Keratinocyte (primary cell): ENCODE measurements at regions of chr7 and their contacts with region 1.

Region 1: GRCh38 chr7:88034083-88034695 is 100.1 kb downstream of the ADAM22 start:
- DNase-seq: no peak
- H3K4me3 ChIP-seq: no peak overlapping the region
- H3K27ac ChIP-seq: no peak overlapping the region
- H3K4me1 ChIP-seq: no peaks in the 10 kb centered on the region
- H3K27me3 ChIP-seq: no peaks in the 10 kb centered on the region
- CTCF ChIP-seq: no peak

Region 2: DNA sequence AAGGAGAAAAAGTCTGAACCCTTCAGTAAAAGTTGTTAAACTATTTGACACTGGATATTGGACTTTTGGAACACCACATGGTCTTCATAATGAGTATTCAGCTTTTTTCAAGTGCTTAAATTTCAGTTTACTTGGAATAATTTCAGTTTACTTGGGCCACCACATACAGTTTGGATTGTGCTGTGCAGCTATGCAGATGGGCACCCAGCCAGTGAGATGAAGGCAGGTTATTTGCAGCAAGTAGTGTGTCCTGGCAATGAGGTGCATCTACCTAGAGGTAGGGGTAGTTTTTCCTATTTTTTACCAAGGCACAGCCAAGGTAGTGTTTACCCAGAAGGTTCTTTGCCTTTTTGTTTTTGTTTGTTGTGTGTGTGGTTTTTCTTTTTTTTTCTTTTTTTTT is 124.1 kb before region 1 on chr7:
- dilution Hi-C with region 1: no loop called
- DNase-seq: no peak
- H3K4me3 ChIP-seq: no peak overlapping the region
- H3K27ac ChIP-seq: no peak overlapping the region
- H3K4me1 ChIP-seq: no peaks in the 10 kb centered on the region
- H3K27me3 ChIP-seq: no peaks in the 10 kb centered on the region
- CTCF ChIP-seq: no peak

Region 3: GRCh38 chr7:87944531-87944930 is 89.7 kb before region 1 on chr7:
- dilution Hi-C with region 1: no loop called
- DNase-seq: no peak
- H3K4me3 ChIP-seq: no peak overlapping the region
- H3K27ac ChIP-seq: no peak overlapping the region
- H3K4me1 ChIP-seq: no peaks in the 10 kb centered on the region
- H3K27me3 ChIP-seq: peaks cover 4% of the 10 kb centered on the region
- CTCF ChIP-seq: no peak

Region 4: GRCh38 chr7:87984088-87984487 is 50.1 kb before region 1 on chr7:
- dilution Hi-C with region 1: no loop called
- DNase-seq: no peak
- H3K4me3 ChIP-seq: no peak overlapping the region
- H3K27ac ChIP-seq: no peak overlapping the region
- H3K4me1 ChIP-seq: no peaks in the 10 kb centered on the region
- H3K27me3 ChIP-seq: no peaks in the 10 kb centered on the region
- CTCF ChIP-seq: no peak

Region 5: GRCh38 chr7:88069093-88069492 is 34.9 kb after region 1 on chr7:
- dilution Hi-C with region 1: loop called (anchors 5 kb)
- DNase-seq: no peak
- H3K4me3 ChIP-seq: no peak overlapping the region
- H3K27ac ChIP-seq: no peak overlapping the region
- H3K4me1 ChIP-seq: no peaks in the 10 kb centered on the region
- H3K27me3 ChIP-seq: no peaks in the 10 kb centered on the region
- CTCF ChIP-seq: no peak

Region 6: GRCh38 chr7:88090671-88091070 is 56.5 kb after region 1 on chr7:
- dilution Hi-C with region 1: no loop called
- DNase-seq: no peak
- H3K4me3 ChIP-seq: no peak overlapping the region
- H3K27ac ChIP-seq: no peak overlapping the region
- H3K4me1 ChIP-seq: no peaks in the 10 kb centered on the region
- H3K27me3 ChIP-seq: no peaks in the 10 kb centered on the region
- CTCF ChIP-seq: no peak